Spleen (tissue), 13 donors: ENCODE measurements at regions of chr9 and their contacts with region 1.

Region 1: DNA sequence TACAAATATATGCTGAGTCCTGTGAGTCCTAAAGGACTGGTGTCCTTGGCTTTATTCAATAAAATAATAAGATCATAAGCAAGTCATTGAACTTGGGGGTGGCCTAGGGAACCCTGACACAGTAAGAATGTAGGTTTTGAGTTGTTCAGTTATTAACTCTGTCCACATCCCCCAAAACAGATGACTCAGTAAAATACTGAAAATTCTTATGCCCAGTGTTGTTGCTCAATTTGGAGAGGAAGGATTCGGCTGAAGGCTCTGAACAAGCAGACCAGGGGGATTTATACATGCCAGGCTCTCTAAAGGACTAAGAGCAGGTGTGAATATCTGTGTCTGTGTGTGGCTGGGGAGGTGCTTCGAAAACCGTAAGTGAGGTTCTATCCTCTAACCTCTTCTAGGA is 173.7 kb downstream of the RMI1 start:
- DNase-seq: no peak
- H3K4me3 ChIP-seq: no peak overlapping the region
- H3K27ac ChIP-seq: no peak overlapping the region
- H3K4me1 ChIP-seq: peaks cover 0 to 5% (median 0%) of the 10 kb centered on the region in 6 donors
- H3K27me3 ChIP-seq: peaks cover 0 to 5% (median 0%) of the 10 kb centered on the region in 7 donors
- CTCF ChIP-seq: no peak
- POLR2A ChIP-seq: no peak

Region 2: DNA sequence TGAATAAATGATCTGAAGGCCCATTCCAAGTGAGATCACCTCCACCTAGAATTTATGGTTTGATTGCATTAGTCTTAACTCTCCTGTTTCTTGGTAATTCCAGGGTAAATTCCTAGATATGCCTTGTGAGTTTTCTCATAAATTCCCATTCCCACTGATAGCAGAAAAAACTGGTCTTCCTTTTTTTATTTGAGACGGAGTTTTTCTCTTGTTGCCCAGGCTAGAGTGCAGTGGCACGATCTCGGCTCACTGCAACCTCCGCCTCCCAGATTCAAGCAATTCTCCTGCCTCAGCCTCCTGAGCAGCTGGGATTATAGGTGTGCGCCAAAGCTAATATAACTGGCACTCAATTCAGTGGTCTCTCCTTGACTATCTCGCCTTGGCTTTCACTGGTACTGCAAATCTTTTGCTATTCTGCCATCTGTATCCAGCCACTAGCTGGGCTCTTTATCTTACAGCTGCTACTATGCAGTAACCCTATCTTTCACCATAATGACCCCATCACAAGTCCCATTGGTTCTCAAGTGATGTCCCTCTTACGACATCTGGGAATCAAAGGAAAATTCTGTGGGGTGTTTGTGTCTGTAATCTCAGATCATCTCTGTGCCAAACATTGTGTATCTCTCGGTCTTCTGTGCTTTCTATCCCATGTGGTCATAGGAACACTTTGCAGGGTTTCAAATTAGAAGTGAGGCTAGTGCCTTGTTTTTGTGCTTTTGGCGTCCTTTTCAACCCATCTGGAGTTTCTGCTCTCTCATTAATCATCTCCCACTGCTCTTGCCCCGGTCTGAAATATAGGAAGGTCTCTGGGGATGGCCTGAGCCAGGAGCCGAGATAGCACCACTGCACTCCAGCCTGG is 188.7 kb before region 1 on chr9:
- intact Hi-C with region 1: no loop called
- DNase-seq: no peak
- H3K4me3 ChIP-seq: no peak overlapping the region
- H3K27ac ChIP-seq: peak overlapping the region in 2 of 8 donors; percentile 2 to 16
- H3K4me1 ChIP-seq: peaks cover 0 to 15% (median 6%) of the 10 kb centered on the region in 6 donors
- H3K27me3 ChIP-seq: no peaks in the 10 kb centered on the region
- CTCF ChIP-seq: no peak
- POLR2A ChIP-seq: no peak

Region 3: GRCh38 chr9:83980395-83981125 is 173.8 kb before region 1 on chr9 and contains the start of gene RMI1:
- intact Hi-C with region 1: loop called (anchors 10 kb)
- DNase-seq: peak; percentile 99
- H3K4me3 ChIP-seq: peak within 1 kb of the TSS; percentile 75 to 97 (median 91)
- H3K27ac ChIP-seq: peak within 1 kb of the TSS; percentile 97 to 100 (median 99)
- H3K4me1 ChIP-seq: peaks cover 24 to 77% (median 50%) of the 10 kb centered on the region in 6 donors
- H3K27me3 ChIP-seq: no peaks in the 10 kb centered on the region
- CTCF ChIP-seq: peak in 8 of 11 experiments; percentile 2 to 51 (median 16)
- POLR2A ChIP-seq: peak; percentile 84 to 94 (median 92)
- total RNA-seq, gene RMI1: 10.8 to 19.5 (median 14.5) TPM